Right ventricle myocardium inferior (tissue), 1 donor: ENCODE measurements at regions of chr11 and their contacts with region 1.

Region 1: DNA sequence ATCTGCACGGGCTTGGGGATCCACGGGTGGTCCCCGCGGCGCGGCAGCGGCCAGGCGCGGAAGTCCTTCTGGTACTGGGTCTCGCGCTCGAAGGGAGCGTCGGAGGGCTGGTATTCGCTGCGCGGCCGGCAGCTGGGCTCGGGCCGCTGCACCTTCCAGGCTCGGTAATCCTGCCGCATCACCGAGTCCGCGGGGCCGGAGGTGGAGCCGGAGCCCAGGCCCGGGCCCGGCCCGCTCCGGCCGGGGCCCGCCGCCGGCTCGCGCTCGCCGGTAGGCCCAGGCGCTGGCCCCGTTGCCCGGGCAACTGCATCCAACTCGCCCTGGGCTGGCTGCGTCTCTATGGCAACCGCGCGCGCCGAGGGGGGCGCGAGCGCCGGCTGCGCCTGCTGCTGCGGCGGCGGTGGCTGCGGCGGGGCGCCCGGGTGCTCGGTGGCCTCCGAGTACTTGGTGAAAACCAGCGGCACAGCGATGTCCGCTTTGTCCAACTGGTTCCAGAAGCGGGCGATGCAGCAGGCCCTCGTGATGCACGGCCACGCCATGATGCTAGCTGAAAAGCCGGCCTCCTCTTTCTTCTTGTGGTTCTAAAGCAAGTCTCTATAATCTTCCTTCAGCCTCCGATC is 897 bp downstream of the MAP6 start:
- DNase-seq: peak; percentile 77
- ATAC-seq: peak; percentile 42

Region 2: DNA sequence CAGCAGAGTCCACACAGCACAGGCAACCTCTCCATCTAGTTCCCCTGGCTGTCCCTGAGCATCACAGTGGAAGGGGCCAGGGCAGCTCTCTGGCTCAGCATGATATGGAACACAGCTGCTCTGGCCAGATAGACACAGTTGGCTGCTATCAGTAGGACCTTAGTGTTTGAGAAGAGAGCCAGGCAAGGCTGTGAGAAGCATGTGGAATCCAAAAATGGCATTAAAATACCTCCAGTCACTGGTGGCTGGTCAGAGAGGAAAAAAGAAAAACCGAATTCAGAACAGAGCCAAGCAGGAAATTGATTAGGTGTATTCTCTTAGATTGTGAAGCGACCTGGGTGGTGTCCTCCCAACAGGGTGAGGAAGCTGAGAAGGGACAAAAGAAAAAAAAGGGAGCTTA is 78.0 kb before region 1 on chr11:
- intact Hi-C with region 1: loop called (anchors 5 kb)
- DNase-seq: no peak
- ATAC-seq: peak; percentile 90